ENCODE measurements at regions of chr5 and their contacts with region 1.

Region 1: GRCh38 chr5:136424835-136425584 is 59.7 kb upstream of the TRPC7 start:
- DNase-seq: peak; percentile 47
- ATAC-seq: peak; percentile 99
- H3K4me3 ChIP-seq: no peak overlapping the region
- H3K27ac ChIP-seq: no peak overlapping the region
- H3K4me1 ChIP-seq: no peaks in the 10 kb centered on the region
- H3K27me3 ChIP-seq: peaks cover 22% of the 10 kb centered on the region
- CTCF ChIP-seq: peak; percentile 75 to 93 (median 93)
- POLR2A ChIP-seq: no peak
- RAD21 ChIP-seq: peak; percentile 76

Region 2: DNA sequence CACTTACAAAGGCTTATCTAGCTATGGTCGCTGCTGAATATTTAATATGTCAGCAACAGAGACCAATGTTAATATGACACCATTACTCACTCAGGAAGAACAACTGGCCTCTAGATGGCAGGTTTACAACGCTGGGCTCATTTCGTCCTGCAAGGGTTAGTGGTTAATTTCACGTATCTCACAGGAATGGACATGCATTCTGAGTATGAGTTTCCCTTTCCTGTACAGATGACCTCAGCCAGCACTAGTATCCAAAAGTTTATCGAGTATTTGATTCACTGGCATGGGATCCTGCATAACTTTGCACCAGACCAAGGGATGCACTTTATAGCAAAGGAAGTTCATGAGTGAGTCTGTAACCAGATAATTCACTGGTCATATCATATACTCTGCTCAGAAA is 51.0 kb before region 1 on chr5:
- CTCF ChIA-PET with region 1: no interaction called
- POLR2A ChIA-PET with region 1: no interaction called
- RAD21 ChIA-PET with region 1: no interaction called
- intact Hi-C with region 1: loop called (anchors 1 kb)
- DNase-seq: no peak
- ATAC-seq: peak; percentile 78
- H3K4me3 ChIP-seq: no peak overlapping the region
- H3K27ac ChIP-seq: no peak overlapping the region
- H3K4me1 ChIP-seq: no peaks in the 10 kb centered on the region
- H3K27me3 ChIP-seq: 0 out of 2 replicates have a peak, but pooled peaks cover 8% of the 10 kb centered on the region
- CTCF ChIP-seq: peak; percentile 34 to 58 (median 36); a peak in 4 of 6 replicates
- POLR2A ChIP-seq: no peak
- RAD21 ChIP-seq: peak; percentile 64

Region 3: GRCh38 chr5:137641148-137641547 is 1216.1 kb after region 1 on chr5:
- CTCF ChIA-PET with region 1: no interaction called
- POLR2A ChIA-PET with region 1: no interaction called
- RAD21 ChIA-PET with region 1: no interaction called
- intact Hi-C with region 1: no loop called
- DNase-seq: no peak
- ATAC-seq: no peak
- H3K4me3 ChIP-seq: no peak overlapping the region
- H3K27ac ChIP-seq: no peak overlapping the region
- H3K4me1 ChIP-seq: no peaks in the 10 kb centered on the region
- H3K27me3 ChIP-seq: peaks cover 12% of the 10 kb centered on the region; the same call in 1 of the 2 replicates
- CTCF ChIP-seq: no peak
- POLR2A ChIP-seq: no peak
- RAD21 ChIP-seq: no peak

Measured in HCT116 (cell line).